ENCODE measurements at regions of chr19 and their contacts with region 1.

Region 1: DNA sequence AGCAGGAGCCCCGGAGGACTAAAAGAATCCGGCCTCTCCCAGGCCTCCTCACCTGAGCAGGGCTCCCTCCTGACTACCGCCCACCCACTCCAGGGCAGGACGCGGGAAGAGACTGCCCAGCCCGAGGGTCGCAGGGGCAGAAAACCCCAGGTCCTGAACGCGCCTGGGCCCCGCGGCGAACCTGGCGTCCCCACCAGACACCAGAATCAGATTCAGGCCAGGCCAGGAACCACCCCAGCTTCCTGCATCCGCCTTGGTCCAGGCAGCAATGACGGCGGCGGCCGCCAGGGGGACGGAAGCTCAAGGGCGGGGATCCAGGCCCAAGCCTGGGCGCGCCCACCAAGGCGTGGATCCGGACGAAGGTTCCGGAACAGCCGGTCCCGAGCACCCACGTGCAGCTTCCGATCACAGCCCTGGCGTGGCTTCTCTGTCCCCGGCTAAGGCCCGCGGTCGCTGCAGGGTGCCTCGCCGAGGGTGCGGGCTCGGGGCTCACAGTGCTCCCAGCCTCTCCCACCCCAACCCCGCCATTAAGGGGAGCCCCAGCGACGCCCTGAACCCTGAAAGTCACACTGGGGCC is 3.6 kb downstream of the LGALS7 start:
- DNase-seq: peak; percentile 83 to 94 (median 92)
- ATAC-seq: peak; percentile 88
- H3K4me3 ChIP-seq: peak overlapping the region; percentile 48
- H3K4me3 Mint-ChIP-seq: peak overlapping the region; percentile 47
- H3K27ac ChIP-seq: peak overlapping the region in 1 of 2 donors; percentile 57
- H3K27ac Mint-ChIP-seq: peak overlapping the region; percentile 65
- H3K4me1 ChIP-seq: peaks cover 14% of the 10 kb centered on the region
- H3K4me1 Mint-ChIP-seq: peaks cover 7% of the 10 kb centered on the region
- H3K27me3 ChIP-seq: no peaks in the 10 kb centered on the region
- H3K27me3 Mint-ChIP-seq: no peaks in the 10 kb centered on the region
- CTCF ChIP-seq: peak; percentile 94

Region 2: GRCh38 chr19:38784224-38784623 is 14.5 kb after region 1 on chr19:
- CTCF ChIA-PET with region 1: interaction called, 4 read pairs
- POLR2A ChIA-PET with region 1: interaction called, 5 read pairs
- intact Hi-C with region 1: loop called in 1 of 2 experiments (anchors 2 kb)
- DNase-seq: no peak
- ATAC-seq: no peak
- H3K4me3 ChIP-seq: no peak overlapping the region
- H3K4me3 Mint-ChIP-seq: no peak overlapping the region
- H3K27ac ChIP-seq: no peak overlapping the region
- H3K27ac Mint-ChIP-seq: no peak overlapping the region
- H3K4me1 ChIP-seq: no peaks in the 10 kb centered on the region
- H3K4me1 Mint-ChIP-seq: no peaks in the 10 kb centered on the region
- H3K27me3 ChIP-seq: no peaks in the 10 kb centered on the region
- H3K27me3 Mint-ChIP-seq: no peaks in the 10 kb centered on the region
- CTCF ChIP-seq: no peak

Region 3: DNA sequence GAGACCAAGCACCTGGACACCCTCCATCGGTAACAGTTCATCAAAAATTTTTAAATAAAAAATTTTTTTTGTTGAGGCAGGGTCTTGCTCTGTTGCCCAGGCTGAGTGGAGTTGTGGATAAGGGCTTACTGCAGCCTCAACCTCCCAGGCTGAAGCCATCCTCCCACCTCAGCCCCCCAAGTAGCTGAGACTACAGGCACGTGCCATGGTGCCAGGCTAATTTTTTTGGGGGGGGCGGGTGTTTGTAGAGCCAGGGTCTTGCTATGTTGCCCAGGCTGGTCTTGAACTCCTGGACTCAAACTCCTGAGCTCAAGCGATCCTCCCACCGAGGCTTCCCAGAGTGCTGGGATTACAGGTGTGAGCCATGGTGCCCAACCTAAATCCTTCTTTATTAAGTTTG is 23.9 kb after region 1 on chr19:
- CTCF ChIA-PET with region 1: interaction called, 3 read pairs
- POLR2A ChIA-PET with region 1: interaction called, 3 read pairs
- intact Hi-C with region 1: loop called in 1 of 2 experiments (anchors 2 kb)
- DNase-seq: no peak
- ATAC-seq: no peak
- H3K4me3 ChIP-seq: no peak overlapping the region
- H3K4me3 Mint-ChIP-seq: peak overlapping the region; percentile 78
- H3K27ac ChIP-seq: no peak overlapping the region
- H3K27ac Mint-ChIP-seq: no peak overlapping the region
- H3K4me1 ChIP-seq: peaks cover 8% of the 10 kb centered on the region
- H3K4me1 Mint-ChIP-seq: peaks cover 5% of the 10 kb centered on the region
- H3K27me3 ChIP-seq: no peaks in the 10 kb centered on the region
- H3K27me3 Mint-ChIP-seq: no peaks in the 10 kb centered on the region
- CTCF ChIP-seq: no peak

Region 4: DNA sequence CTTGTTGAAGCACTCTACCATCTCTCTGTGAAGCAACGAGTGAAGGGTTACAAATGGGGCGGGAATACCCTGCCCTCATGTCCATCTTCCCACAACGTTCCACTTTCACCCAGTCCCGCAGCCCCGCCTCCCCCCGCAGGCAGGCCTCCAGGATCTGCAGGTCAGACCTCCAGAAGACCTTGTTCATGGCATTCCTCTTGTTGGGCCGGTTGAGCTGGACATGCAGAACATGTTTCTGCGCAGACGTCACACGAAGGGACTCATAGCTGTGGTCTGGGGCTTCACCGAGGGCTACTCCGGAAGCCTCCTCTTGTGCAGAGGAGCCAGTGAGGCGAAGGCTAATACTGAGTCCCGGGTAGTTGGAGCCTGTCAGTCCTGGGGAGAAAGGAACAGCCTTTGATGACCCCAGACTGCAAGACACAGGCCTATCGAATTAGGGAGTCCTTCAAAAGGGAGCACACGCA is 61.5 kb after region 1 on chr19:
- CTCF ChIA-PET with region 1: interaction called, 8 read pairs
- POLR2A ChIA-PET with region 1: interaction called, 13 read pairs
- intact Hi-C with region 1: no loop called
- DNase-seq: peak in 3 of 14 experiments; percentile 7 to 61 (median 44)
- ATAC-seq: peak; percentile 7
- H3K4me3 ChIP-seq: peak overlapping the region; percentile 73
- H3K4me3 Mint-ChIP-seq: peak overlapping the region; percentile 94
- H3K27ac ChIP-seq: peak overlapping the region; percentile 69 to 74
- H3K27ac Mint-ChIP-seq: peak overlapping the region; percentile 92
- H3K4me1 ChIP-seq: peaks cover 34% of the 10 kb centered on the region
- H3K4me1 Mint-ChIP-seq: peaks cover 39% of the 10 kb centered on the region
- H3K27me3 ChIP-seq: no peaks in the 10 kb centered on the region
- H3K27me3 Mint-ChIP-seq: no peaks in the 10 kb centered on the region
- CTCF ChIP-seq: no peak

Region 5: DNA sequence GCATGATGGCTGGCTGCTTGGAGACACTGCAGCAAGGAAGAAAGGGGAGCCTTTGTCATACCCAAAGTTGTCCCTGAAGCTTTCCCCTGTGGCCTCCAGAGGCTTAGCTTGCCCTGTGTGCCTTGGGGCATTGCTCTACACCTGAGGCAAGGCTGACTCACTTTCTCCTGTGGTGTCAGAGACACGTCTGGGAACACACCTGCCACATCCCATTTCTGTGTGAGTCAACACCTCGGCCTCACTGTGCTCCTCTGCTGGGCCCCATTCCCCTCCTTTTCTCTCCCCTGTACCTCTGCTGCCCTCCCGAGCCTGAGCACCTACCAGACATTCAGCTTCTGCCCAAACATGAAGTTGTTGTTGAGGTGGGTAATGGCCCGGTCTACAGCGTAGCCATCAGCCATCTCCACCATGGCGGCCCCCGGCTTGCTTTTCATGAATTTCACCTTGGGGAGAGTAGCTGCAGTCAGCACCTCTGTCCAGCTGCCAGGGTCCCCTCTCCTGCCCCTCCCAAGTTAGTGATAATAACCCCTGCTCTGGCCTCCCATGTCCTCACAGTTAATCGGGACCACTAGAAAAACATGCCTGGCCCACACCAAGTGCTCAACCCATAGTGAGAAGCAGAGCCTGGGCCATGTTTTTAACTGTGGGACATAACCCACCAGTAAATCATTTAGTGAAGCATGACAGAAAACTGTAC is 69.0 kb after region 1 on chr19:
- CTCF ChIA-PET with region 1: interaction called, 6 read pairs
- POLR2A ChIA-PET with region 1: interaction called, 14 read pairs
- intact Hi-C with region 1: no loop called
- DNase-seq: peak in 5 of 14 experiments; percentile 29 to 60 (median 33)
- ATAC-seq: no peak
- H3K4me3 ChIP-seq: no peak overlapping the region
- H3K4me3 Mint-ChIP-seq: no peak overlapping the region
- H3K27ac ChIP-seq: no peak overlapping the region
- H3K27ac Mint-ChIP-seq: peak overlapping the region; percentile 55
- H3K4me1 ChIP-seq: peaks cover 42% of the 10 kb centered on the region
- H3K4me1 Mint-ChIP-seq: peaks cover 39% of the 10 kb centered on the region
- H3K27me3 ChIP-seq: no peaks in the 10 kb centered on the region
- H3K27me3 Mint-ChIP-seq: peaks cover 5% of the 10 kb centered on the region
- CTCF ChIP-seq: no peak

Region 6: GRCh38 chr19:38849860-38850435 is 80.2 kb after region 1 on chr19 and contains the start of gene HNRNPL:
- CTCF ChIA-PET with region 1: interaction called, 11 read pairs
- POLR2A ChIA-PET with region 1: interaction called, 20 read pairs
- intact Hi-C with region 1: no loop called
- DNase-seq: peak; percentile 98 to 100 (median 99)
- ATAC-seq: peak; percentile 69
- H3K4me3 ChIP-seq: peak within 1 kb of the TSS; percentile 76
- H3K4me3 Mint-ChIP-seq: peak within 1 kb of the TSS; percentile 98
- H3K27ac ChIP-seq: peak within 1 kb of the TSS; percentile 95 to 97
- H3K27ac Mint-ChIP-seq: peak within 1 kb of the TSS; percentile 97
- H3K4me1 ChIP-seq: peaks cover 66% of the 10 kb centered on the region
- H3K4me1 Mint-ChIP-seq: peaks cover 63% of the 10 kb centered on the region
- H3K27me3 ChIP-seq: no peaks in the 10 kb centered on the region
- H3K27me3 Mint-ChIP-seq: no peaks in the 10 kb centered on the region
- CTCF ChIP-seq: peak; percentile 16
- total RNA-seq, gene HNRNPL: 535 to 565 TPM

Region 7: DNA sequence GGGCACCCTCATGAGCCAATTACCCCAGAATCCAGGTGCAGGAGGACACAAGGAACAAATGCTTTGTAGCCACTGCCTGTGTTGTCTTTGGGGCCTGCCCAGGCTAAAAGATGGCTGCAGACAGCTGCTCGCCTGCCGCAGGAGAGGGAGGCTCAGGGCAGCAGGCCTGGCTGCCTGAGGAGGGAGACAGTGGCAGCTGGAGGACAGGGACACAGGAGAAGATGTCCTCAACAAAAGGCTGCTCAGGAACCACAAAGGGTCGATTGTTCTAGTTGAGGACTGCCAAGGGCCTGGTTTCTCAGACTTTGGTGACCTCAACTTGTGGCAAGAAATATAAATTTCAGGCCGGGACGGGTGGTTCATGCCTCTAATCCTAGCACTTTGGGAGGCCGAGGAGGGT is 122.0 kb after region 1 on chr19:
- CTCF ChIA-PET with region 1: interaction called, 6 read pairs
- POLR2A ChIA-PET with region 1: no interaction called
- intact Hi-C with region 1: loop called in 1 of 2 experiments (anchors 5 kb)
- DNase-seq: peak in 1 of 14 experiments; percentile 2
- ATAC-seq: no peak
- H3K4me3 ChIP-seq: no peak overlapping the region
- H3K4me3 Mint-ChIP-seq: no peak overlapping the region
- H3K27ac ChIP-seq: no peak overlapping the region
- H3K27ac Mint-ChIP-seq: no peak overlapping the region
- H3K4me1 ChIP-seq: peaks cover 16% of the 10 kb centered on the region
- H3K4me1 Mint-ChIP-seq: peaks cover 6% of the 10 kb centered on the region
- H3K27me3 ChIP-seq: no peaks in the 10 kb centered on the region
- H3K27me3 Mint-ChIP-seq: no peaks in the 10 kb centered on the region
- CTCF ChIP-seq: no peak